Activated B cell treated with CpG ODN at 0.5 μM for 24 hours (primary cell): ENCODE measurements at regions of chr1 and their contacts with region 1.

Region 1: GRCh38 chr1:66380452-66381212 is 153.3 kb upstream of the SGIP1 start:
- DNase-seq: peak; percentile 59
- ATAC-seq: peak; percentile 98
- H3K4me3 Mint-ChIP-seq: peak overlapping the region; percentile 72
- H3K27ac Mint-ChIP-seq: peak overlapping the region; percentile 92
- H3K4me1 Mint-ChIP-seq: peaks cover 87% of the 10 kb centered on the region
- H3K27me3 Mint-ChIP-seq: no peaks in the 10 kb centered on the region
- CTCF ChIP-seq: no peak

Region 2: DNA sequence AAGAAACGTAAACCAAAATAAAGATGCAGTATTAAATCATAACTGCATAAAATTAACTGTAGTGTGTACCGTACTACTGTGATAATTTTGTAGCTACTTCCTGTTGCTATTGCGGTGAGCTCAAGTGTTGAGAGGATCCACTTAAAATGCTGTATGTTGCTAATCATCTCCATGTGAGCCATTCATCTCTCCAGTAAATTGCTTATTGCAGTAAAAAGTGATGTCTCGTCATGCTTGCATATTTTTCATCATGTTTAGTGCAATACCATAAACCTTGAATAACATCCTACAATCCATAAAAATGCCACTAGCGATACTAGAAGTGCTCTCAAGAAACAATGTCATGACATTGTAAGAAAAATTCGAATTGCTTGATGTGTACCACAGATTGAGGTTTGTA is 1569.5 kb before region 1 on chr1:
- CTCF ChIA-PET with region 1: no interaction called
- POLR2A ChIA-PET with region 1: no interaction called
- intact Hi-C with region 1: no loop called
- DNase-seq: no peak
- ATAC-seq: no peak
- H3K4me3 Mint-ChIP-seq: no peak overlapping the region
- H3K27ac Mint-ChIP-seq: no peak overlapping the region
- H3K4me1 Mint-ChIP-seq: no peaks in the 10 kb centered on the region
- H3K27me3 Mint-ChIP-seq: peaks cover 2% of the 10 kb centered on the region
- CTCF ChIP-seq: no peak

Region 3: GRCh38 chr1:66350001-66350547 is 30.6 kb before region 1 on chr1:
- CTCF ChIA-PET with region 1: interaction called, 5 read pairs
- POLR2A ChIA-PET with region 1: interaction called, 20 read pairs
- intact Hi-C with region 1: no loop called
- DNase-seq: no peak
- ATAC-seq: peak; percentile 80
- H3K4me3 Mint-ChIP-seq: peak overlapping the region; percentile 72
- H3K27ac Mint-ChIP-seq: peak overlapping the region; percentile 89
- H3K4me1 Mint-ChIP-seq: peaks cover 97% of the 10 kb centered on the region
- H3K27me3 Mint-ChIP-seq: no peaks in the 10 kb centered on the region
- CTCF ChIP-seq: no peak

Region 4: DNA sequence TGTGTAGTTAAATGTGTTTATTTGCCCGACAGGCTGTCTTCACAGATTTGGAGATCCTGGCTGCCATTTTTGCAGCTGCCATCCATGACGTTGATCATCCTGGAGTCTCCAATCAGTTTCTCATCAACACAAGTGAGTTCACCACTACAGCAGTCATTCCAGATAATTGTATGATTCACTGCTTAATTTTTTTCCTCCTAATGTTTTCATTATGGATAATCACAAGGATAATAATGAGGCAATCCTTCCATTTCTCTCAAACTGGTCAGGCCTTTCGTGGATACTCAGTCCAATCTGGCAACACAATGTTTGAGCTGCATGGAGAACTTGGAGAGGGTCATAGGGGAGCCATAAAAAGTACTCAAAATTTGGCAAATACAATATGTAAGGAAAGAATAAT is 15.0 kb before region 1 on chr1:
- CTCF ChIA-PET with region 1: interaction called, 3 read pairs
- POLR2A ChIA-PET with region 1: interaction called, 18 read pairs
- intact Hi-C with region 1: loop called (anchors 2 kb)
- DNase-seq: no peak
- ATAC-seq: no peak
- H3K4me3 Mint-ChIP-seq: no peak overlapping the region
- H3K27ac Mint-ChIP-seq: peak overlapping the region; percentile 75
- H3K4me1 Mint-ChIP-seq: peaks cover 81% of the 10 kb centered on the region
- H3K27me3 Mint-ChIP-seq: no peaks in the 10 kb centered on the region
- CTCF ChIP-seq: no peak

Region 5: GRCh38 chr1:66402194-66402593 is 21.6 kb after region 1 on chr1:
- CTCF ChIA-PET with region 1: interaction called, 34 read pairs
- POLR2A ChIA-PET with region 1: interaction called, 156 read pairs
- intact Hi-C with region 1: loop called (anchors 1 kb)
- DNase-seq: peak; percentile 65
- ATAC-seq: peak; percentile 86
- H3K4me3 Mint-ChIP-seq: peak overlapping the region; percentile 72
- H3K27ac Mint-ChIP-seq: peak overlapping the region; percentile 90
- H3K4me1 Mint-ChIP-seq: peaks cover 67% of the 10 kb centered on the region
- H3K27me3 Mint-ChIP-seq: no peaks in the 10 kb centered on the region
- CTCF ChIP-seq: no peak

Region 6: GRCh38 chr1:66464802-66465201 is 84.2 kb after region 1 on chr1:
- CTCF ChIA-PET with region 1: no interaction called
- POLR2A ChIA-PET with region 1: no interaction called
- intact Hi-C with region 1: no loop called
- DNase-seq: no peak
- ATAC-seq: no peak
- H3K4me3 Mint-ChIP-seq: no peak overlapping the region
- H3K27ac Mint-ChIP-seq: no peak overlapping the region
- H3K4me1 Mint-ChIP-seq: no peaks in the 10 kb centered on the region
- H3K27me3 Mint-ChIP-seq: peaks cover 20% of the 10 kb centered on the region
- CTCF ChIP-seq: no peak